Activated B cell treated with CpG ODN at 0.5 μM for 24 hours (primary cell): ENCODE measurements at regions of chr5 and their contacts with region 1.

Region 1: GRCh38 chr5:141968914-141969608 is at the start of gene RNF14:
- DNase-seq: peak; percentile 93
- ATAC-seq: peak; percentile 89
- H3K4me3 Mint-ChIP-seq: peak within 1 kb of the TSS; percentile 91
- H3K27ac Mint-ChIP-seq: peak within 1 kb of the TSS; percentile 91
- H3K4me1 Mint-ChIP-seq: peaks cover 46% of the 10 kb centered on the region
- H3K27me3 Mint-ChIP-seq: no peaks in the 10 kb centered on the region
- CTCF ChIP-seq: peak; percentile 41
- total RNA-seq, gene RNF14: 30.0 and 30.4 TPM in 2 replicates

Region 2: GRCh38 chr5:140926443-140927227 is 1042.4 kb before region 1 on chr5:
- CTCF ChIA-PET with region 1: no interaction called
- POLR2A ChIA-PET with region 1: no interaction called
- intact Hi-C with region 1: no loop called
- DNase-seq: no peak
- ATAC-seq: no peak
- H3K4me3 Mint-ChIP-seq: peak overlapping the region; percentile 41
- H3K27ac Mint-ChIP-seq: no peak overlapping the region
- H3K4me1 Mint-ChIP-seq: peaks cover 4% of the 10 kb centered on the region
- H3K27me3 Mint-ChIP-seq: peaks cover 42% of the 10 kb centered on the region
- CTCF ChIP-seq: no peak

Region 3: GRCh38 chr5:141636413-141637122 is 332.5 kb before region 1 on chr5 and contains the starts of genes HDAC3 and RELL2:
- CTCF ChIA-PET with region 1: no interaction called
- POLR2A ChIA-PET with region 1: interaction called, 18 read pairs
- intact Hi-C with region 1: loop called (anchors 1 kb)
- DNase-seq: peak; percentile 99
- ATAC-seq: peak; percentile 84
- H3K4me3 Mint-ChIP-seq: peak within 1 kb of the TSS; percentile 89
- H3K27ac Mint-ChIP-seq: peak within 1 kb of the TSS; percentile 73
- H3K4me1 Mint-ChIP-seq: peaks cover 39% of the 10 kb centered on the region
- H3K27me3 Mint-ChIP-seq: no peaks in the 10 kb centered on the region
- CTCF ChIP-seq: no peak
- total RNA-seq, gene HDAC3: 101 and 102 TPM in 2 replicates
- total RNA-seq, gene RELL2: 16.8 and 18.9 TPM in 2 replicates

Region 4: DNA sequence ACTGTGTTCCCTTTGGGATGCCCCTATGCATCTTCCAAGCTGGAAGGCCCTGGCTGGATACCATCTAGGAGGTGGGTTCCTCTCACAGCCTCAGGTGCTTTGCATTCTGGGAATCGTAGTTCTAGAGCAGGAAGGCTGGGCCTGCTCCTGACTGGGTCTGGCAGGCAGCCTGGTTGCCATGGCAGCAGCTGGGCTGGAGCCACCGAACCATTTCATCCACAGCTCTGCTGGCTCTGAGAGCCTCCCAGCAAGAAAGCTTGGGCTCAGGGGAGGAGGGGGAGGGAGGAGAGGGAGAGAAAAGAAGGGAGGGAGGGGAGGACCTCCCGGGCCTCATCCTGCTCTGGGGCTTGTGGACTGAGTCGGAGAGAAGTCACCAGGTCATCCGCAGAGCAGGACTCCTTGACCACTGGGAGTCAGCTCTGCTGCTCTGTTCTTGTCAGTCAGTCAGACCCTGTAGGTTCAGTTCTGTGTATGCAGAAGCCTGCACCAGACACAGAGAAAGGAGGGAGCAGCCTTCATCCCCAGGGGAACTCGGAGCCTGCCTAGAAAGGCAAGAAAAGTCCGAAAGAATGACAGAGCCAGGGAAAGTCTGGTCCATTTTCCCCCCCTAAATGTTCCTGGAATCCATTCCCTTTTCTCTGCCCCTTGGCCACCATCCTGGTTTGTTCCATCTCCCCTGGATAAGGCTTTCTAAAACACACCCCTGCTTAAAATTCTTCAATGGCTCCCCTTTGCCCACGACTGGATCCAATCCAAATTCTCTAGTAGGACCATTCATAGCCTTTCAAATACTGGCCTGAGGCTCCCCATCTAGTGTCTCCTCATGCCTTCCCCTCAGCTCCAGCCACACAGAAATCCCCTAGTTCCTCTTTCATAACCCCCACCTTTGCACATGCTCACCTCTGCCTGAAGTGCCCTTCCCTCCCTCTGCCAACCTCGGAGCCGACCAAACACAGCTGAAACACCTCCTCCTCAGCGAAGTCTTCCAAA is 221.6 kb before region 1 on chr5:
- CTCF ChIA-PET with region 1: no interaction called
- POLR2A ChIA-PET with region 1: no interaction called
- intact Hi-C with region 1: loop called (anchors 5 kb)
- DNase-seq: peak; percentile 33
- ATAC-seq: peak; percentile 87
- H3K4me3 Mint-ChIP-seq: peak overlapping the region; percentile 33
- H3K27ac Mint-ChIP-seq: peak overlapping the region; percentile 70
- H3K4me1 Mint-ChIP-seq: peaks cover 23% of the 10 kb centered on the region
- H3K27me3 Mint-ChIP-seq: peaks cover 30% of the 10 kb centered on the region
- CTCF ChIP-seq: no peak

Region 5: GRCh38 chr5:141992349-141992963 is 23.4 kb after region 1 on chr5:
- CTCF ChIA-PET with region 1: interaction called, 26 read pairs
- POLR2A ChIA-PET with region 1: interaction called, 3 read pairs
- intact Hi-C with region 1: no loop called
- DNase-seq: no peak
- ATAC-seq: peak; percentile 50
- H3K4me3 Mint-ChIP-seq: no peak overlapping the region
- H3K27ac Mint-ChIP-seq: no peak overlapping the region
- H3K4me1 Mint-ChIP-seq: no peaks in the 10 kb centered on the region
- H3K27me3 Mint-ChIP-seq: no peaks in the 10 kb centered on the region
- CTCF ChIP-seq: peak; percentile 57

Region 6: GRCh38 chr5:142095651-142096330 is 126.7 kb after region 1 on chr5:
- CTCF ChIA-PET with region 1: no interaction called
- POLR2A ChIA-PET with region 1: interaction called, 22 read pairs
- intact Hi-C with region 1: no loop called
- DNase-seq: no peak
- ATAC-seq: peak; percentile 54
- H3K4me3 Mint-ChIP-seq: no peak overlapping the region
- H3K27ac Mint-ChIP-seq: no peak overlapping the region
- H3K4me1 Mint-ChIP-seq: peaks cover 11% of the 10 kb centered on the region
- H3K27me3 Mint-ChIP-seq: peaks cover 8% of the 10 kb centered on the region
- CTCF ChIP-seq: no peak

Region 7: DNA sequence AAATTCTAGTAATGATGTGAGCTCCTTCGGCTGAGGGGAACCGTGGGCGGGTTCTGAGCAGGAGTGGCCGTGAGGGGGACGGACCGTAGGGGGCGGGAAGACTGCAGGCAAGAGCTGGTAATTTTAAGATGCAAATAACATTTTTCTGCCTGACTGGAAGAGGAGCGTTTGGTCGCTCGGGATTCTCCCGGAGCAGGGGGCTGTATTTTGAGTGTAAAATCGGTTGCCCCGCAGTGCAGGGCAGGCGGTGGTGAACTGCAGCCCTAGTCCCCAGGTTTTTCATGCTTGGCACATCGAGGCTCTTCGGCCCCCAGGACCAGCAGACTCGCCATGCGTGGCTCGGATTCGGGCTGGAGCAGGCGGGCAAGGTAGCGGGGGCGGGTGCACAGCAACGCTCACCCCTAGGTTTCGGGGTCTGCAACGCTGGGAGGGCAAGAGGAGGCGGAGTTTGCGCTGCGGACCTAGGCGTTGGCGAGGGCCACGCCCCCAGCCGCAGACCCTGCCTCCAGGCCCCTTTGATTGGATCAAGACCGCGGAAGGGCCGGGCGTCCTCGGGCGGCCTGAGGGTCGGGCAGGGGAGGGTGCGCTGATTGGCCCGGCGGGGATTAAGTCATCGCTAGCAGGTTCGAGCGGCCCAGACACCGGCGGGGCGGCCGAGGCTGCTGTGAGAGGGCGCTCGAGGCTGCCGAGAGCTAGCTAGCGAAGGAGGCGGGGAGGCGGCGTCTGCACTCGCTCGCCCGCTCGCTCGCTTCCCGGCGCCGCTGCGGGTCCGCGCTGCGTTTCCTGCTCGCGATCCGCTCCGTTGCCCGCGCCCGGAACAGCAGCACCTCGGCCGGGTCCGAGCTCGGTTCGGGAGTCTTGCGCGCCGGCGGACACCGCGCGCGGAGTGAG is 800.9 kb after region 1 on chr5 and contains the start of gene ARHGAP26:
- CTCF ChIA-PET with region 1: no interaction called
- POLR2A ChIA-PET with region 1: no interaction called
- intact Hi-C with region 1: loop called (anchors 5 kb)
- DNase-seq: peak; percentile 89
- ATAC-seq: peak; percentile 95
- H3K4me3 Mint-ChIP-seq: peak within 1 kb of the TSS; percentile 97
- H3K27ac Mint-ChIP-seq: peak within 1 kb of the TSS; percentile 91
- H3K4me1 Mint-ChIP-seq: peaks cover 25% of the 10 kb centered on the region
- H3K27me3 Mint-ChIP-seq: no peaks in the 10 kb centered on the region
- CTCF ChIP-seq: no peak
- total RNA-seq, gene ARHGAP26: 14.0 and 20.9 TPM in 2 replicates